ENCODE measurements at regions of chr2 and their contacts with region 1.

Region 1: DNA sequence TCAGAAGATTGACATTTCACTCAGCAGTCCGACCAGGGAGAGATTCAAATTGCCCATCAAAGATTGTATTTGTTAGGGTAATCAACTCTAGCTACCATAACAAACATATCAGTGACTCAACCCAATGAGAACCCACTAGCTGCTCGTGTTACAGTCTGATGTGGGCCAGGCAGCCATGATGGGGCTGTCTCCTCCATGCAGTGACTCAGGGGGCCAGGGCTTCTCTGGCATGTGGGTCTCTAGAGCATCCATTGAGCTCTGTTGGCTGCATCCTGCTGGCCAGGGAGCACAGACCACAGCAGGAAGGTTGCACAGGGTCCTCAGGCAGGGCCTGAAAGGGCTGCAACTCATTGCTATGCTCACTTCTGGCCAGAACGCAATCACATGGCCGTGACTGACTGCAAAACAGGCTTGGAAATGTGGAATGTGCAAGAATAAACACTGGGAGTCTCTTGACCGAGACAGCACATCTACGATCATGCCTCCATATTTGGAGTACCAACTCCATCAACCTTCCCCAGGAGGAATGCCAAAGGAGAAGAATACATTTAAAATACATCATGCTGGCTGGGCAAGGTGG is 216.8 kb downstream of the EIPR1 start:
- DNase-seq: no peak
- H3K4me3 ChIP-seq: no peak overlapping the region
- H3K27ac ChIP-seq: no peak overlapping the region
- H3K4me1 ChIP-seq: no peaks in the 10 kb centered on the region
- H3K27me3 ChIP-seq: no peaks in the 10 kb centered on the region
- CTCF ChIP-seq: no peak

Region 2: GRCh38 chr2:3062476-3063260 is 98.2 kb before region 1 on chr2:
- CTCF ChIA-PET with region 1: no interaction called
- POLR2A ChIA-PET with region 1: no interaction called
- intact Hi-C with region 1: no loop called
- DNase-seq: no peak
- H3K4me3 ChIP-seq: no peak overlapping the region
- H3K27ac ChIP-seq: no peak overlapping the region
- H3K4me1 ChIP-seq: no peaks in the 10 kb centered on the region
- H3K27me3 ChIP-seq: no peaks in the 10 kb centered on the region
- CTCF ChIP-seq: no peak

Region 3: GRCh38 chr2:3100386-3100785 is 60.5 kb before region 1 on chr2:
- CTCF ChIA-PET with region 1: no interaction called
- POLR2A ChIA-PET with region 1: interaction called, 17 read pairs
- intact Hi-C with region 1: no loop called
- DNase-seq: no peak
- H3K4me3 ChIP-seq: no peak overlapping the region
- H3K27ac ChIP-seq: no peak overlapping the region
- H3K4me1 ChIP-seq: no peaks in the 10 kb centered on the region
- H3K27me3 ChIP-seq: no peaks in the 10 kb centered on the region
- CTCF ChIP-seq: no peak

Measured in A673 (cell line).